Activated T-helper 2 cell treated with anti-CD3 and anti-CD28 coated beads, Interferon-gamma antibody, Interleukin-2, Interleukin-4, amounts not matched to agents 10 μg/mL and 5 μg/mL and 100 μg/mL, durations not matched to agents 14 hours and 24 hours and 36 hours (primary cell): ENCODE measurements at regions of chr16 and their contacts with region 1.

Region 1: DNA sequence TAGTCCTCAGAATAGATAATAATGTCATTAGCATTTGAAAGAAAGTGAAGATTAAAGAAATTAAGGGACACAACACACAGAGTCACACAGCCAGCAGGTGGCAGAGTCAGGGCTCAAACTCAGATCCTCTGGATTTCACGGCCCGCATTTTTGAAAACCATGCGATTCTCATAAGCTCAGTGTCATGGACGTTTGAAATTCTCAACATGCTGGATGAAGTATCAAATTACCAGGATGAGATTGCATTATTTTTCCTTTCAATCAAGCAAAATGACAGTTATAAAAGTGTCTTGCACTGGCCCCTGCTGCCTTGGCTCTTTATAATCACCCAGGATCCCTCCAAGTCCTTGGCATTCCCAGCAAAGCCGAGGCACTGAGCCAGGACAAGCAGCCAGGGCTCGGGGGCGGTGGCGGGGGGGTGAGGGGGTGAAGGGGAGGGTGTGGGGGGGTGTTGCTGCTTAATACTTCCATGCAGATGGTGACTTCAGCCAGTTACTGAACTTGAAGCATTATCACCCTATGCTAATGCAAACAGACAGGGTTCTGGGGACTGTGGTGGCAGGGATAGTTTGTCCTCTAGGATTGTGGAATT is 6.6 kb upstream of the BMERB1 start:
- DNase-seq: peak; percentile 12
- H3K4me3 Mint-ChIP-seq: no peak overlapping the region
- H3K27ac Mint-ChIP-seq: no peak overlapping the region
- H3K4me1 Mint-ChIP-seq: peaks cover 2% of the 10 kb centered on the region
- H3K27me3 Mint-ChIP-seq: peaks cover 6% of the 10 kb centered on the region

Region 2: GRCh38 chr16:15502041-15502725 is 74.4 kb after region 1 on chr16:
- intact Hi-C with region 1: loop called (anchors 10 kb)
- DNase-seq: no peak
- H3K4me3 Mint-ChIP-seq: no peak overlapping the region
- H3K27ac Mint-ChIP-seq: no peak overlapping the region
- H3K4me1 Mint-ChIP-seq: peaks cover 16% of the 10 kb centered on the region
- H3K27me3 Mint-ChIP-seq: peaks cover 4% of the 10 kb centered on the region

Region 3: DNA sequence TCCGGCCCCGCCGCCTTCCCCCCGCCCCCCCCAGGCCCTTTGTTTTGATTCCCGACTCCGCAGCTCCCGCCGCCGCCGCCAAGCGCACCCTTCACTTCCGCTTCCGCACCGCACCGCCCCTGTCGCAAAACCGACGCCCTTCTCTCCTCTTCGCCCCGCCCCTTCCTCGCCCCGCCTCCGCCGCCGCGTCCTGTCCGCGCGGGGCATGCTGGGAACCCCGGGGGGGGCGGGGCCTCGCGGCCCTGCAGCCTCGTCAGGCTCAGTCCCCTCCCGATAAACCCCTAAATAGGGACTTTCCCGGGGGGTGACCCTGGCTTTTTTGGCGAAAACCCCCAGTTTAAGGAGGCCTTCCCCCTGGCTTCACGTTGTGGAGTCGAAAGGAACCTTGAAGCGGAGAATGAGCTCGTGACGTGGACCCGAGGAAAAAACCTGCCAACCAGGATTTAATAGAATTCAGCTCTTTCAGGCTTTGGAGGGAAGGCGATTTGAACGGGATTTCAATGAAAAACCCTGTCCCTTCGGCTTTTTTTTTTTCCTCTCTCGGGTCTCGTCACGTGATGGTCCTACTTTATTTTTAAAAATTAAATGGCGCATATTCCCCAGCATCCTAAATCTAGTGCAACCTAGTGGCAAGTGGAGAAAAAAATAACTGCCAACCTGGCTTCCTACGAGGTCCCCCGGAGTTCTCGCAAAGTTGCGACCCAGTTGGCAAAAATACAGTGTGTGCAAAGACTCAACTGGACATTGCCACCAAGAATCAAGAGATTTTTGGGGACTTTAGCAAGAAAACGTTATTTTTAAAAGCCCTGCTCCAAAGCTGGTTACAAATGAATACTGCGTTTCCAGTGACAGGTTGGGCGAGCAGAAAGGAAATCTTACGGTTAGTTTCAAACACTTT is 215.6 kb after region 1 on chr16 and contains the start of gene MARF1:
- intact Hi-C with region 1: loop called (anchors 2 kb)
- DNase-seq: peak; percentile 98
- H3K4me3 Mint-ChIP-seq: peak within 1 kb of the TSS; percentile 93
- H3K27ac Mint-ChIP-seq: peak within 1 kb of the TSS; percentile 98
- H3K4me1 Mint-ChIP-seq: peaks cover 42% of the 10 kb centered on the region
- H3K27me3 Mint-ChIP-seq: no peaks in the 10 kb centered on the region
- total RNA-seq, gene MARF1: 49.9 and 56.4 TPM in 2 replicates